Vagina (tissue), 2 donors: ENCODE measurements at regions of chr20 and their contacts with region 1.

Region 1: DNA sequence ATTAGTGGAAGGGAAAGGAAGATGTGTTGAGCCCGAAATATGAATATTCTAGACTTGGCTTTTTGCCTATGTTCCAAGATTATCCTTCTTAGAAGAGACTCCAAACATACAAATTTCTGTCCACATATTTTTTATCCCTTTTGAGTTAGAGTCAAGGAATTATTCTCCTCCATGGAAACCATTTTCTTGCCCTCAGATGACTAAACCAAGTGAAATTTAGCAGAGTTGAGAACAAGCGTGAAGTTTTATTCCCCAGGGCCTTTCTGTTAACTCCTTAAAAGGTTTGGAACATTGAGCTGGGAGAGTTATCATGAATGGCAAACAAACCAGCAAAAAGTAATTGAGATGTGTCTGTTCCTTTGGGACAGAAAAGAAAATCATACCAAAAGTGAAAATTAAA is 286.1 kb upstream of the PLCB4 start:
- DNase-seq: no peak
- H3K4me3 ChIP-seq: no peak overlapping the region
- H3K27ac ChIP-seq: no peak overlapping the region
- H3K4me1 ChIP-seq: no peaks in the 10 kb centered on the region
- H3K27me3 ChIP-seq: no peaks in the 10 kb centered on the region
- CTCF ChIP-seq: no peak
- POLR2A ChIP-seq: no peak

Region 2: GRCh38 chr20:9392892-9393857 is 610.4 kb after region 1 on chr20:
- intact Hi-C with region 1: loop called (anchors 10 kb)
- DNase-seq: no peak
- H3K4me3 ChIP-seq: no peak overlapping the region
- H3K27ac ChIP-seq: no peak overlapping the region
- H3K4me1 ChIP-seq: no peaks in the 10 kb centered on the region
- H3K27me3 ChIP-seq: no peaks in the 10 kb centered on the region
- CTCF ChIP-seq: peak in 2 of 3 experiments; percentile 64 to 68
- POLR2A ChIP-seq: no peak